ENCODE measurements at regions of chr12 and their contacts with region 1.

Region 1: GRCh38 chr12:85866986-85867776 is 6.9 kb upstream of the NTS start:
- DNase-seq: peak; percentile 10
- H3K4me3 ChIP-seq: no peak overlapping the region
- CTCF ChIP-seq: peak; percentile 68

Region 2: DNA sequence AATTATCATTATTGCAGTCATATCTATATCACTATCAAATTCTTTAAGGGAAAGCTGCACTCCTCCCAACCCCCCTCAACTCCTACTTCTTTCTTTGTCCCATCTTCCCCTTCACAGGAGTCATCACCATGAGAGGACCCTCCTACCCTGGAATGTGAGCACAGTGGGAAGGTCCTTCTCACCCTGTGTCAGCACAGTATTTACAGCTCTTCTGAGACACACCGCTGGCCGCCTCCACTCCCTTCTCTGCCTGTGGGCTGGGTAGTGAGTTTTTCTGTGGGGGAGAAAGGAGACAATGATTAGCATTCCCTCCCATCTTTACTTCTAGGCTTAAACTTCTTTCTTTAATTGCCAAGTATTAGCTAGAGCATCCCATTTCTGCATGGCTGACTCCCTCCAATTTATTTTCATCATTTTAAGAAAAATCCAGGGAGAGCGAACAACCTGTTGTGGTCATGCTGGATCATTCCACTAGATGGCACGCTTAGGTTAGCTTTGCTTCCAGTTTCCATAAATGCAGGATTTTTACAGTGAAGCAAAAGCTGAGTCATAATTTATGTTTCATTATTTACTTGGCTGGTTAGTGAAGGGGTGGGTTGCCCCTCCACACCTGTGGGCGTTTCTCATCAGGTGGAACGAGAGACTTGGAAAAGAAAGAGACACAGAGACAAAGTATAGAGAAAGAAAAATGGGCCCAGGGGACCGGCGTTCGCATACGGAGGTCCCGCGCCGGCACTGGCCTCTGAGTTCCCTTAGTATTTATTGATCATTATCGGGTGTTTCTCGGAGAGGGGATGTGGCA is 398.6 kb before region 1 on chr12:
- CTCF ChIA-PET with region 1: interaction called, 87 read pairs
- POLR2A ChIA-PET with region 1: no interaction called
- DNase-seq: peak; percentile 28
- H3K4me3 ChIP-seq: peak overlapping the region; percentile 35
- CTCF ChIP-seq: peak; percentile 77

Region 3: GRCh38 chr12:85559536-85559935 is 307.6 kb before region 1 on chr12:
- CTCF ChIA-PET with region 1: interaction called, 10 read pairs
- POLR2A ChIA-PET with region 1: no interaction called
- DNase-seq: no peak
- H3K4me3 ChIP-seq: no peak overlapping the region
- CTCF ChIP-seq: no peak

Region 4: DNA sequence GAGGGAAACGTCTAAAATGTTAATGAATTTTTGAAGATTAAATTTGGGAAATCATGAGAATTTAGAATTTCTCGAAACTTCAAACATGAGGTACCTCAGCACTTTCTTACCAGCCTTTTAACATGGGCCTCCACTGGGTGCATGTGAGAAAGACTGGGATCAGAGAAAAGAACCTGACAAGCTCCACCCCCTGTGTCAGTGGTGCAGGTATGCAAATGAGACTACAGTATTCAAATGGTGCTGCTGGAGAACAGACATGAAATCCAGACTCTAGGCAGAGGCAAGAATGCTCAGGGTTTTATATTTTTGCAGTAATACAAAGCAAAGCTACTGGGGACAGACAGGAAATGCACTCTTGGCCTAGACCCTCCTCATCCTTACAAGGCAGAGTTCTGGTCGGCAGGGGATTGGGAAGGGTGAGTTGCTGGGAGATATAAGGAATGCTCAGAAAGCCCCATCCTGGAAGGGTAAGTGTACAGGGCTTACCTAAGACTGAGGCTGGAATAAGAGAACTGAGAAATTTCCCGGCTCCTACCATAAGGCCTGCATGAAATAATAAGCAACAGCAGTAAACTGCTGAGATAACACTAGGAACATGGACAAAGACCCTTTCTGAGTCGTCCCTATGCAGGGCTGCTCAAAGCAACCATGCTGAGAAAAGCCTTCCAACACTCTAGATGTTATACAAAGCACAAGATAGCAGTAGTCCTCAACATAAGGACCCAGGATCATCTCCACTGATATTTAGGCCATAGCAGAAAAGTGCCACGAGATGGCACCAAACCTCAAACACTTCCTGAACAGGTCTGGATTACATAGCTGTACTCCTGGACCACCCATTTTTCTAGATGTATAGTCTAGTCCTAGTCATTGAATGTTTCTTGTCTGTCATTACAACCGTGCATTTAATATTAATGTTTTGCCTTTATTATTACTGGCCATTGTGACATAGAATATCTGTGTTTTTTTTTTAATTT is 291.8 kb before region 1 on chr12:
- CTCF ChIA-PET with region 1: interaction called, 227 read pairs
- POLR2A ChIA-PET with region 1: no interaction called
- DNase-seq: no peak
- H3K4me3 ChIP-seq: no peak overlapping the region
- CTCF ChIP-seq: peak; percentile 60

Region 5: DNA sequence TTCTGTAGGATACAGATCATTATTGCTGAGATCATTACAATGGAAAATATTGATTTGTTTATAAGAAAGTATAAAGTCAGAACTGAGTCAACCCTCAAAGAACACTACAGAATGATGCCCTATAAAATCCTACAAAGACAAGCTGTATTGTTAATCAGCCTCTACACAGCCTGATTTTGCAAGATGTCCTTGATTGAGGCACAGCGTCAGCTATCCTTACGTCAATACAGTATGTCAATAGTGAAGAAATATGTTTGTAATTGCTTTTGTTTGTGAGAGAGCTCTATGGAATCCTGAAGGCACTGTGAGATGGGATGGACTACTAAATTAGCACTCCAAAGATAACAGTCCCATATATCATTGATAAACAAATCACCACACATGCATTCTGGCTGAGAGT is 101.7 kb before region 1 on chr12:
- CTCF ChIA-PET with region 1: no interaction called
- POLR2A ChIA-PET with region 1: no interaction called
- DNase-seq: no peak
- H3K4me3 ChIP-seq: no peak overlapping the region
- CTCF ChIP-seq: no peak

Region 6: GRCh38 chr12:85829391-85829790 is 37.8 kb before region 1 on chr12:
- CTCF ChIA-PET with region 1: no interaction called
- POLR2A ChIA-PET with region 1: no interaction called
- DNase-seq: no peak
- H3K4me3 ChIP-seq: no peak overlapping the region
- CTCF ChIP-seq: no peak

Region 7: GRCh38 chr12:85855305-85855704 is 11.9 kb before region 1 on chr12:
- CTCF ChIA-PET with region 1: interaction called, 18 read pairs
- POLR2A ChIA-PET with region 1: no interaction called
- DNase-seq: no peak
- H3K4me3 ChIP-seq: no peak overlapping the region
- CTCF ChIP-seq: no peak

Region 8: GRCh38 chr12:86137916-86138315 is 270.7 kb after region 1 on chr12:
- CTCF ChIA-PET with region 1: no interaction called
- POLR2A ChIA-PET with region 1: no interaction called
- DNase-seq: peak; percentile 4
- H3K4me3 ChIP-seq: no peak overlapping the region
- CTCF ChIP-seq: no peak